ENCODE measurements at regions of chr16 and their contacts with region 1.

Region 1: GRCh38 chr16:84672276-84673202 is 24.2 kb downstream of the KLHL36 start:
- DNase-seq: peak; percentile 54 to 95 (median 80)
- ATAC-seq: peak; percentile 89 to 98 (median 94)
- H3K4me3 ChIP-seq: no peak overlapping the region
- H3K27ac ChIP-seq: no peak overlapping the region
- H3K4me1 ChIP-seq: no peaks in the 10 kb centered on the region
- H3K27me3 ChIP-seq: no peaks in the 10 kb centered on the region
- CTCF ChIP-seq: peak; percentile 88 to 91 (median 90)

Region 2: DNA sequence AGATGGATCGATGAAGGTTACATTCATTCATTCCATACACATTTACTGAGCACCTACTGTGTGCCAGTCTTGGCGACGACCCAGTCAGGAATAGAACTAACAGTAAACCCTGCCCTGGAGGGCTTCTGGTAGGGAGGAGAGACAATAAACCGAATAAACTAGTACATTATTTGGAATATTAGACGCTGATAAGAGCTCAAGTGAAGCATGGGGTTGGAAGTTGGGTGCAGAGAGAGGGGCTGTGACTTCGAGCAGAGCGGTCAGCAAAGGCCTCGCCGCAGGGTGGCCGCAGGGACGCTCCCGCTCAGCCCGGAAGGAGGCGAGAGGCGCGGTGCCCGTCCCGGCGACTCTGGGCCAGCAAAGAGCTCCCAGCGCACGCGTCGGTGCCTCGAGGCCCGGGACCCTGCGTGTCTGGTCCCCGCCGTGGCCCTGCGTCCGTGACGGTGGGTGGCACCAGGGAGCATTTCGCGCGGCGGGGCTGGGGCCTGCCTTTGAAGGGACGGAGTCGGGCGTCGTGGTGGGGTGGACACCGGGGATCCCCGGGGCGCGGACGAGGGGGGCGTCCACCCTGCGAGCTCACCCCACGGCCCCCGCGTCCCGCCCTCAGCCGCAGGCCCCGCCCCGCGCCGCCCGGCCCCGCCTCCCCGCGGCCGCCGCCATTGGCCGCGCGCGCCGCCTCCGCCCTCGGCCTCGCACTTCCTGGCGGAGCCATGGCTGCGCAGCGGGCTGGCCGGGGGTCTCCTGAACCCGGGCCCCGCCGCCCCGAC is 24.5 kb before region 1 on chr16 and contains the start of gene KLHL36:
- intact Hi-C with region 1: no loop called
- DNase-seq: peak; percentile 47 to 86 (median 65)
- ATAC-seq: peak; percentile 78 to 82 (median 78)
- H3K4me3 ChIP-seq: peak within 1 kb of the TSS; percentile 60 to 90 (median 72)
- H3K27ac ChIP-seq: peak within 1 kb of the TSS; percentile 19 to 74 (median 70)
- H3K4me1 ChIP-seq: peaks cover 0 to 14% (median 5%) of the 10 kb centered on the region in 3 donors
- H3K27me3 ChIP-seq: no peaks in the 10 kb centered on the region
- CTCF ChIP-seq: no peak
- total RNA-seq, gene KLHL36: 24.6 to 41.5 (median 27.4) TPM

Region 3: GRCh38 chr16:84738255-84739038 is 65.9 kb after region 1 on chr16:
- intact Hi-C with region 1: loop called in 1 of 3 experiments (anchors 10 kb)
- DNase-seq: peak in 5 of 6 donors; percentile 59 to 77 (median 69)
- ATAC-seq: peak; percentile 71 to 84 (median 80)
- H3K4me3 ChIP-seq: no peak overlapping the region
- H3K27ac ChIP-seq: no peak overlapping the region
- H3K4me1 ChIP-seq: peaks cover 5 to 13% (median 7%) of the 10 kb centered on the region in 3 donors
- H3K27me3 ChIP-seq: no peaks in the 10 kb centered on the region
- CTCF ChIP-seq: peak; percentile 77 to 83 (median 81)

Measured in pancreas (tissue), 10 donors.